Endothelial cell of umbilical vein (primary cell): ENCODE measurements at regions of chr10 and their contacts with region 1.

Region 1: GRCh38 chr10:79068562-79069324 is at the start of gene ZMIZ1:
- DNase-seq: peak; percentile 87
- H3K4me3 ChIP-seq: peak within 1 kb of the TSS; percentile 58 to 81 (median 73)
- H3K27ac ChIP-seq: peak within 1 kb of the TSS; percentile 69
- H3K4me1 ChIP-seq: peaks cover 30% of the 10 kb centered on the region
- H3K27me3 ChIP-seq: no peaks in the 10 kb centered on the region
- CTCF ChIP-seq: peak in 1 of 2 donors; percentile 15
- POLR2A ChIP-seq: peak; percentile 81
- total RNA-seq, gene ZMIZ1: 46.7 and 49.6 TPM in 2 replicates

Region 2: DNA sequence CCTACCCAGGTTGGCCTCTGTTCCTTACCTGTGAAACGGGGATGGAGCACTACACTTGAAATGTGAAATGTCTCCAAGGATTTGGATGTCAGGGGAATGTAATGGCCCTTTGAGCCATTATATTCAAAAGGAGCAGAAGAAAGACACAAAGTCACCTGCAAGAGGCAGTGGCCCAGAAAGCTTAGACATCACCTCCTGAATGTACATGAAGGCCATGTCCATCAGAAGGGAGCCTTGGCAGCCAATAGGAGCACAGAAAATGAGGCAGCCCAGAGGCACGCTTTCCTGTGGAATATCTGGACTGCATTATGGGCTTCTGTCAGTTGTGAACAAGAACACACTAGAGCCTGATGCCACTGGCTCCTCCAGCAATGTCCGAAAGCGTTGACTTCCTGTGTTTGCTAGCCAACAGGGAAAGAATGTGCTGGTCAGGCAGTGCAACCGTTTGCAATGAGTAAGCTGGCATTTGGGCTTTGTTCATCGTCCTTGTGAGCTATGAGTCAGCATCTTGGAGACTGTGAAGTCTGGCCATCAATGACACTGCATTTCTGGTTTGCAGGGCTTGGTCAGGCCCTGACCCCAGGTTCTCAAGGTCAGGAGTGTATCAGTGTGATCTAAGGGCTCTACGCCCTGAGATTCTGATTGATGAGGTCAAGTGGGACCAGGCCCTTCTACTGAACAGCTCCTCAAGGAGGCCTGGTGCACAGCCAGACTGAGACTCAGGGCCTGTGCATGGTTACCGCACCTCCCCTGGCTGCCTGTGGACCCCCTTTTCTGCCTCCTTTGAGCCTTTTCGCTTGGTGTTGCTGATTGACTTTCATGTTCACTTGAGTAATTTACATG is 812.7 kb before region 1 on chr10:
- CTCF ChIA-PET with region 1: no interaction called
- POLR2A ChIA-PET with region 1: no interaction called
- dilution Hi-C with region 1: no loop called
- intact Hi-C with region 1: loop called (anchors 1 kb)
- DNase-seq: peak; percentile 92
- H3K4me3 ChIP-seq: no peak overlapping the region
- H3K27ac ChIP-seq: peak overlapping the region; percentile 90
- H3K4me1 ChIP-seq: peaks cover 16% of the 10 kb centered on the region
- H3K27me3 ChIP-seq: no peaks in the 10 kb centered on the region
- CTCF ChIP-seq: no peak
- POLR2A ChIP-seq: no peak

Region 3: DNA sequence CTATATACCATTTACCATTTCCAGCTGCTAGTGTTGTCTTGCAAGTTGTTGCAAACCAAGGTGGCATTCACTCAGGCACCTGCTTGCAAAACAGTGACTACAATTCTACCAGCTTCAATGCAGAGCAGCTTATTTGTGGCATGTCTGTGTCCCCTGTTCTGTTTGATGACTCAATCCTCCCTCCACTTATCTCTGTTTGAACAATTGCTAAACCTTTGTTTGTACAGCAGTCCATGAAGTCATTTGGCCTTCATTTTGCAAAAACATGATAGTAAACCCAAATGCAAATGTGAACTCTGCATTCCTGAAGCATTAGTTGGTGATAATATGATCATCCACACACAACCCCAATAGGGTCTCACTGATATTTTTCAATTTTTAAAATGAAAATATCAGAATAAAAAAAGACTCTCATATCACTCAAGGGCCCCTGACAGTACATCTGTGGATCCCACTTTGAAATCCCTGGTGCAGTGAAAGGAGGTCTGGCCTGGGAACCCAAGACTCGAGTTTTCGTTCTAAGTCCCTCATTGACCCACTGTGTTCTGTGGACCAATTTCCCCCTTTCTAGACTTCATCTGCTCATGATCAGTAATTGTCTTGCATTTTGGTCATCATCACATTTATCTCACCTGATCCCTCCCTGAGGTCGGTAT is 609.6 kb before region 1 on chr10:
- CTCF ChIA-PET with region 1: no interaction called
- POLR2A ChIA-PET with region 1: no interaction called
- dilution Hi-C with region 1: no loop called
- intact Hi-C with region 1: loop called (anchors 5 kb)
- DNase-seq: peak; percentile 98
- H3K4me3 ChIP-seq: no peak overlapping the region
- H3K27ac ChIP-seq: peak overlapping the region; percentile 99
- H3K4me1 ChIP-seq: peaks cover 43% of the 10 kb centered on the region
- H3K27me3 ChIP-seq: no peaks in the 10 kb centered on the region
- CTCF ChIP-seq: no peak
- POLR2A ChIP-seq: peak; percentile 87

Region 4: GRCh38 chr10:78852466-78853240 is 216.1 kb before region 1 on chr10:
- CTCF ChIA-PET with region 1: interaction called, 4 read pairs
- POLR2A ChIA-PET with region 1: no interaction called
- dilution Hi-C with region 1: no loop called
- intact Hi-C with region 1: loop called (anchors 1 kb)
- DNase-seq: peak; percentile 11
- H3K4me3 ChIP-seq: no peak overlapping the region
- H3K27ac ChIP-seq: no peak overlapping the region
- H3K4me1 ChIP-seq: no peaks in the 10 kb centered on the region
- H3K27me3 ChIP-seq: peaks cover 0 to 9% of the 10 kb centered on the region in 2 experiments
- CTCF ChIP-seq: peak; percentile 17 to 30
- POLR2A ChIP-seq: no peak

Region 5: DNA sequence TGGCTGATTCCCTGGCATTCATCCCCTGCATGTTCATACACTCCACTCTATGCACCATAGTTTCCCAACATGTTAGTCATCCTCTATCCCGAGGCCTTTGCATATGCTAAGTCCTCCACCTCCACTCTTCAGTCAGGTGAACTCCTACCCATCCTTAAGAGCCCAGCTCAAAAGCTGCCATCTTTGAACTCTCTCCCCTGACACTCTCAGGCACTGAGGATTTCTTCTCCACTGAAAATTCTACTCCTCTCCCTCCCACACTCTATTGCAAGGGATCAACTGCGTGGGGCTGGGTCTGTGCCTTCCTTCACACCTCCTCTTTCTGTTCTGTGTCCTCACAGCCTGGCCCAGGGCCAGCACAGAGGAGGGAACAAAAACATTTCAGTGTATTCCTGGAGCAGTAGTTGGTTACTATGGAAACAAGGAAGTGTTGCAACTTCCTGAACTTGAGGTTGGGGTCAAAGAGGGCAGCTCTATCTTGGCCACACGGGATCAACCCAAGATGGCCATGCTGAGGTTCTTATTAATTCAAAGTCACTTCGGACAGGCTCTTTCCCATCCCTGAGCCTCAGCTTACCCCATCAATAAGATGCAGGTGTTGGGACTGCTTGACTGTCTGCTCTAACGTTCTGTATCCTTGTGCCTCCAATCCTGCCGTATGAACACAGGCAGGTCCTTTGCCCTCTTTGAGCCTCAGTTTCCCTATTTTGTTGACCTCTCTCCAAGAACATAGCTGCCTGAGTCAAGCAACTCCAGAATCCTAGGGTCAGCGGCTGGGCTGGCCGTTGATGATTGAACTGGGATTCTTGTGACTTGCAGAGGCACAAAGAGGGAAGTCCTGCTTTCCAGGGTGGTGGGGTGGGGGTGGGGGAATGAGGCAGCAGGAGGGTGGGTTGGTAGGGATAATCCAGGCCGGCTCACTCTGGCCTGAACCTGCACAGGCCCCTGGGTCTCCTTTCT is 15.5 kb after region 1 on chr10:
- CTCF ChIA-PET with region 1: interaction called, 5 read pairs
- POLR2A ChIA-PET with region 1: no interaction called
- dilution Hi-C with region 1: no loop called
- intact Hi-C with region 1: loop called (anchors 1 kb)
- DNase-seq: peak; percentile 95
- H3K4me3 ChIP-seq: no peak overlapping the region
- H3K27ac ChIP-seq: peak overlapping the region; percentile 64
- H3K4me1 ChIP-seq: peaks cover 27% of the 10 kb centered on the region
- H3K27me3 ChIP-seq: no peaks in the 10 kb centered on the region
- CTCF ChIP-seq: no peak
- POLR2A ChIP-seq: peak; percentile 20

Region 6: GRCh38 chr10:79155301-79156081 is 86.7 kb after region 1 on chr10:
- CTCF ChIA-PET with region 1: interaction called, 5 read pairs
- POLR2A ChIA-PET with region 1: no interaction called
- dilution Hi-C with region 1: no loop called
- intact Hi-C with region 1: loop called (anchors 1 kb)
- DNase-seq: peak; percentile 66
- H3K4me3 ChIP-seq: no peak overlapping the region
- H3K27ac ChIP-seq: peak overlapping the region; percentile 77
- H3K4me1 ChIP-seq: peaks cover 76% of the 10 kb centered on the region
- H3K27me3 ChIP-seq: no peaks in the 10 kb centered on the region
- CTCF ChIP-seq: peak in 1 of 2 donors; percentile 34
- POLR2A ChIP-seq: no peak